Transverse colon (tissue), 4 donors: ENCODE measurements at regions of chr12 and their contacts with region 1.

Region 1: GRCh38 chr12:97573901-97574300 is 111.3 kb downstream of the RMST start:
- DNase-seq: no peak
- H3K4me3 ChIP-seq: no peak overlapping the region
- H3K27ac ChIP-seq: no peak overlapping the region
- H3K4me1 ChIP-seq: no peaks in the 10 kb centered on the region
- H3K27me3 ChIP-seq: no peaks in the 10 kb centered on the region
- CTCF ChIP-seq: no peak
- EP300 ChIP-seq: no peak
- POLR2A ChIP-seq: no peak

Region 2: DNA sequence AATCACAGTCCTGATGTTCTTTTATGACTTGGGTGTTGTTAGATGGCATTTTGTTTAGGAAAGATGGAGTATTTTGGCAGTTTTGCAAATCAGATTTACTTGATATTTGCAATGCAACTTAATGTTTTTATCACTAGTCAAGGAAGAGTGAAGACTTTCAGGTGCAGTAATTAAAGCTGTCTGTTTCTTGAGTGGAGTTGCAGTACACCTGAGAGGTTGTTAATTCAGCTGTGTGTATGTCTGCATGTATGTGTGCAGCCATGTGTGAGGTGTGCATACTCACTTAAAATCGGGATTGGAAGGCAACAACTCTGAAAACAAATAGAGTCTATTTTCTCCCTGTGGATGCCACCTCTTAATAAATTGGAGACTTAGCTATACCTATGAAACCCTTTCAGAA is 16.8 kb before region 1 on chr12:
- in situ Hi-C with region 1: no loop called
- intact Hi-C with region 1: loop called (anchors 1 kb)
- DNase-seq: no peak
- H3K4me3 ChIP-seq: no peak overlapping the region
- H3K27ac ChIP-seq: no peak overlapping the region
- H3K4me1 ChIP-seq: no peaks in the 10 kb centered on the region
- H3K27me3 ChIP-seq: no peaks in the 10 kb centered on the region
- CTCF ChIP-seq: no peak
- EP300 ChIP-seq: no peak
- POLR2A ChIP-seq: no peak